Panc1 (cell line): ENCODE measurements at regions of chr16 and their contacts with region 1.

Region 1: GRCh38 chr16:24776501-24777220 is 47.2 kb downstream of the TNRC6A start:
- DNase-seq: no peak
- ATAC-seq: no peak
- H3K4me3 ChIP-seq: no peak overlapping the region
- H3K27ac ChIP-seq: no peak overlapping the region
- H3K4me1 ChIP-seq: peaks cover 15% of the 10 kb centered on the region; the same call in 1 of the 2 replicates
- H3K27me3 ChIP-seq: no peaks in the 10 kb centered on the region
- CTCF ChIP-seq: no peak

Region 2: DNA sequence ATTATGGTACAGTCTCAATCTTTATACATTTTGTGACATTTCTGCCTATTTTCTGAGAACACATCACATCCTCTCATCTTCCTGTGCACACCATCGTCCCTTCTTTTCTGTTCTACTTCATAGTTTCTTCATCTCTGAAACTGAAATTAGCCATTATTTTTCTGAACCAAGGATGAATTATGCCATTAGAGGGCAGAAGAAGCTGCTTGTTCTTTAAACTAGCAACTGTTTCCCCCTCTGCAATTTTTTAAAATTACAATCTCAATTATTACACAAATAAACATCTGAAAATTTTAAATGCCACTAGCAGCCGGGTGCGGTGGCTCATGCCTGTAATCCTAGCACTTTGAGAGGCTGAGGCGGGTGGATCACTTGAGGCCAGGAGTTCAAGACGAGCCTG is 196.0 kb before region 1 on chr16:
- CTCF ChIA-PET with region 1: no interaction called
- POLR2A ChIA-PET with region 1: interaction called, 14 read pairs
- in situ Hi-C with region 1: no loop called
- intact Hi-C with region 1: no loop called
- DNase-seq: peak; percentile 15
- ATAC-seq: peak; percentile 37; the same call in 1 of the 2 replicates
- H3K4me3 ChIP-seq: no peak overlapping the region
- H3K27ac ChIP-seq: no peak overlapping the region
- H3K4me1 ChIP-seq: no peaks in the 10 kb centered on the region
- H3K27me3 ChIP-seq: no peaks in the 10 kb centered on the region
- CTCF ChIP-seq: no peak; the same call in 1 of the 2 replicates